ENCODE measurements at regions of chr5 and their contacts with region 1.

Region 1: DNA sequence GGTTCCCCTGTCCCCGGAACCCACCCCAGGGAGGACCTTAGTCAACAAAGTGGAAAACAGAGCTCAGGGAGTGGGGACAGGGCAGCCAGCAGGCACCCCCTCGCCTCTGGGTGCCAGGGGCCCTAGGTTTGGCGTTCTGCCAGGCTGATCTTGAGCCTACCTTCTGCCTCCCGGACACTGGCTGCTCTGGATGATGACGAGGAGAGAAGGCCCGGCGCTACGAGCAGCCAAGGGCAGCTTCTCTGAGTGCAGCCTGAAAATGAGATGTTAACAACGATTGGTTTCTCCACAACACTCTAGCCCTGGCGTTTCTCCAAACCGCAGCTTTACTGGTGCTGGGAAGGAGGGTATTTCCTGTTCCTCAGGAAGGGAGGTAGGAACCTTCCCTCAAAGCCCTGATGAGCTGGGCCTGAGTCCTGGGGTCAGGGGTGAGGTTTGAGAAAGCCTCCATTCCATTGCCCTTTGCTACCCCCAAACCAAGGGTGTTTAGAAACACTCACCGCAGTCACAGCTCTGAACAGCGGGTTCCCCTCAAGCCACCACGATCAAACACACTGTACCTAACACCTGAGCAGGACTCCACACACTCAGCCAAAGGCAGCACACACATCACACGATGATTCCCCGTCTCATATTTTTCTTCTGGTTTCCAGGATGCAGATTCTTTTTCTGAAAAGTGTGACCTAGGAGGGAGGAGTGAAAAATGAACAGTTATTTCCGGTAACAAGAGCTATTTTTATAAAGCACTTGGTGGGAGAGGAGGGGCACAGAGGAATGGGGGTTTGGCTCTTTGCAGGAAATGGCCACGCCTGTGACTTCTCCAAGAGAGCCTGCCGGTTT is at the start of gene STING1:
- DNase-seq: peak; percentile 53 to 86
- ATAC-seq: peak; percentile 77 to 95 (median 89)
- H3K4me3 ChIP-seq: peak within 1 kb of the TSS; percentile 48
- H3K4me3 Mint-ChIP-seq: peak within 1 kb of the TSS; percentile 86
- H3K27ac ChIP-seq: peak within 1 kb of the TSS; percentile 82
- H3K27ac Mint-ChIP-seq: peak within 1 kb of the TSS; percentile 85 to 91
- H3K4me1 ChIP-seq: peaks cover 61% of the 10 kb centered on the region
- H3K4me1 Mint-ChIP-seq: peaks cover 24 to 36% of the 10 kb centered on the region in 2 donors
- H3K27me3 ChIP-seq: no peaks in the 10 kb centered on the region
- H3K27me3 Mint-ChIP-seq: no peaks in the 10 kb centered on the region
- CTCF ChIP-seq: no peak
- total RNA-seq, gene STING1: 95.5 to 98.9 (median 96.6) TPM

Region 2: DNA sequence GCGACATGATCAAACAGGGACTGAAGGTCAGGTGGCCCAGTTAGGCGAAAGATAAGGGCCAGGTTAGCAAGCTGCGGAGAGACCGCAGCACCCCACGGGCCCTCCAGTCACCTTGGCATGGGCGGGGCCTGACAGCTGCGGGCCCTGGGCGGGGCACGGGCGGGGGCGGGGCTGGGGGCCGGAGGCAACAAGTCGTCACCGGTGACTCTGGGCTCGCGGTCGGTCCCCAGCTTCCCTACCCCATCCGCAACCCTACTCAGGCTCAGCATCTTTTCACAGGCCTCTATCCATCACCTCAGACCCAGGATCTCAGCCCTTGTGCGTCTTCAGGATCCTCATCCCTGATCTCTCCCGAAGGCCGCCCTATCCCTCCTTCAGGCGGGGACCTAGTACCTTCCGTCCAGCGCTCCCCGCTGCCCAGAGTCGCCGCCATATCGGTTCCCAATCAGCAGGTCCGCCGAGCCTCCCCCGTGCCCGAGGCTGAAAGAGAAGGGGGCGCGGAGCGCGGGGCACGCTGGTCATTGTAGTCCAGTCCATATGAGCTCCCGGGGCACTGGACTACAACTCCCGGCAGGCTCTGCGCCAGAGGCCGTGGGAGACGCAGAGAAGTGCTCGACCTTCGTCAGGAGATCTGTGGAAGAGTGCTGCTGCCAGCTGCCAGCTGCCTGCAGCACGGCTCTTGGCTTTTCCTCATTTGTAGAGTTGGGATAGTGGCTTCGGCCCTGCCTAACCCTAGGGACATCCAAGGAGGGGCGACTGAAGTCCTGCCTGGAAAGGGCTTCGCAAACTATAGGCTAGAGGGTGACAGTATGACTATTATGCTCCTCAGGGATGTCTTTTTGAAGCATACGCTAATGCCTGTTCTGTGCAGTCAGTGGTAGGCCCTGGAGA is 43.0 kb before region 1 on chr5 and contains the start of gene DNAJC18:
- intact Hi-C with region 1: loop called (anchors 2 kb)
- DNase-seq: peak; percentile 78 to 93
- ATAC-seq: peak; percentile 93 to 95 (median 94)
- H3K4me3 ChIP-seq: peak within 1 kb of the TSS; percentile 98
- H3K4me3 Mint-ChIP-seq: peak within 1 kb of the TSS; percentile 100
- H3K27ac ChIP-seq: peak within 1 kb of the TSS; percentile 99
- H3K27ac Mint-ChIP-seq: peak within 1 kb of the TSS; percentile 98 to 100
- H3K4me1 ChIP-seq: peaks cover 15% of the 10 kb centered on the region
- H3K4me1 Mint-ChIP-seq: peaks cover 17 to 24% of the 10 kb centered on the region in 2 donors
- H3K27me3 ChIP-seq: no peaks in the 10 kb centered on the region
- H3K27me3 Mint-ChIP-seq: no peaks in the 10 kb centered on the region
- CTCF ChIP-seq: no peak
- total RNA-seq, gene DNAJC18: 2.9 to 4.9 (median 3.6) TPM

Region 3: GRCh38 chr5:139458580-139459406 is 23.5 kb before region 1 on chr5:
- intact Hi-C with region 1: loop called (anchors 1 kb)
- DNase-seq: peak; percentile 70 to 94
- ATAC-seq: peak; percentile 85 to 91 (median 88)
- H3K4me3 ChIP-seq: no peak overlapping the region
- H3K4me3 Mint-ChIP-seq: peak overlapping the region; percentile 73
- H3K27ac ChIP-seq: peak overlapping the region; percentile 61
- H3K27ac Mint-ChIP-seq: peak overlapping the region; percentile 57 to 92
- H3K4me1 ChIP-seq: peaks cover 48% of the 10 kb centered on the region
- H3K4me1 Mint-ChIP-seq: peaks cover 33 to 59% of the 10 kb centered on the region in 2 donors
- H3K27me3 ChIP-seq: no peaks in the 10 kb centered on the region
- H3K27me3 Mint-ChIP-seq: no peaks in the 10 kb centered on the region
- CTCF ChIP-seq: no peak

Region 4: GRCh38 chr5:139517683-139518564 is 35.7 kb after region 1 on chr5:
- intact Hi-C with region 1: loop called (anchors 5 kb)
- DNase-seq: peak; percentile 91 to 94
- ATAC-seq: peak; percentile 94 to 99 (median 96)
- H3K4me3 ChIP-seq: peak overlapping the region; percentile 71
- H3K4me3 Mint-ChIP-seq: peak overlapping the region; percentile 82
- H3K27ac ChIP-seq: peak overlapping the region; percentile 82
- H3K27ac Mint-ChIP-seq: peak overlapping the region; percentile 83 to 93
- H3K4me1 ChIP-seq: peaks cover 22% of the 10 kb centered on the region
- H3K4me1 Mint-ChIP-seq: peaks cover 24 to 28% of the 10 kb centered on the region in 2 donors
- H3K27me3 ChIP-seq: no peaks in the 10 kb centered on the region
- H3K27me3 Mint-ChIP-seq: peaks cover 0 to 6% of the 10 kb centered on the region in 2 donors
- CTCF ChIP-seq: peak; percentile 99

Region 5: DNA sequence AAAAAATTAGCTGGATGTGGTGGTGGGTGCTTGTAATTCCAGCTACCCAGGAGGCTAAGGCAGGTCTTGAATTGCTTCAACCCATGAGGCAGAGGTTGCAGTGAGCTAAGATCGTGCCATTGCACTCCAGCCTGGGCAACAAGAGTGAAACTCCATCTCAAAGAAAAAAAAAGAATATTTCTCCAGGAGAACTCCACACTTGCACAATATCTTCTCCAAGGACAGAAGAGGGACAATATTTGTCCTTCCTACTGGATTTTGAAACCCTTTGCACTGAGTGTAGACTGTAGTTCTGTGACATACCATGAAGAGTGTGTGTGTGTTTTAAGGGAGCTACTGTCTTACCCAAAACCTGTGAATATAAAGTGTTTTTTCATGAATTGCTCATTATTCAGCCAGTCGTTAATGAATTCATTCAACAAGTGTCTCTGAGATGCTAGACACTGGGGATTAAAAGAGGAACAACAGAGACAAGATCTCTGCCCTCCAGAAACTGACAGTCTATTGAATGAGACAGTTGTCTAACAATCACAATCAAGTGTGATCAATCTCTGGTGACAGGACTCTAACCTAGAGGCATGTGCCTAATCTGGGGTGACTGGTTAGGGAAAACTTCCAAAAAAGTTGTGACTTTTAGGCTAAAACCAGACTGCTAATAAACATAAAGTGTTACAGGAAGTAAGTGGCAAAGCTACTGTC is 69.1 kb after region 1 on chr5:
- intact Hi-C with region 1: no loop called
- DNase-seq: no peak
- ATAC-seq: no peak
- H3K4me3 ChIP-seq: no peak overlapping the region
- H3K4me3 Mint-ChIP-seq: no peak overlapping the region
- H3K27ac ChIP-seq: no peak overlapping the region
- H3K27ac Mint-ChIP-seq: no peak overlapping the region
- H3K4me1 ChIP-seq: no peaks in the 10 kb centered on the region
- H3K4me1 Mint-ChIP-seq: peaks cover 0 to 5% of the 10 kb centered on the region in 2 donors
- H3K27me3 ChIP-seq: no peaks in the 10 kb centered on the region
- H3K27me3 Mint-ChIP-seq: peaks cover 0 to 3% of the 10 kb centered on the region in 2 donors
- CTCF ChIP-seq: no peak

Measured in natural killer cell (primary cell).